Testis (tissue), 5 donors: ENCODE measurements at regions of chr11 and their contacts with region 1.

Region 1: DNA sequence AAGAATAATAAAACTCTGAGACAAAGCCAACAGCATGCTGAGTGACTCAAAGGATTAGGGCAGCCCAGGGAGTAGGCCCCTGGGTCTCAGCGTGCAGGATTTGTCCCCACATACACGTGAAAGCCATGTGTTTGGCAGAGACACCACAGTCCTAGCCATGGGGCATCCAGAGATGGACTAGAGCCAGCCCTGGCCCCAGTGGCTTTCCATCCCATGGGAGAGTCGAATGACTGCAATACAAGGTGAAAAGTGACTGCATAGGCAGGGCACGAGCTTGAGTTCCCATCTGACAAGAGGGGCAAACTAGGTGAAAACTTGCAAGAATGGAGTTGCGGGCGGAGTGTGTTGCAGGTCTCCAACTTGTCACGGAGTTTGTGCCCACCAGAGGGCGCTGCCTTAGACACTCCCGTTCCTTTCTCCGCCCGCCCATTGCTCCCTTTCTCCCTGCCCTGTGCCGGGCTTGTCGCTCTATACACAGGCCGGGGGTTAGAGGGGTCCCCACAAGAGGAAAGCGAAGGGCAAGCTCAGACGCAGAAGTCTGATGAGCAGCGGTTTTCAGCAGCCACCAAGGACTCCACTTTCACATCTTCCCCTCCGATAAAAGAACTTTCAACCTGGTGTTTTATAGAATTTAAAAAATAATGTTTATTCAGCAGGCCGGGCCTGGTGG is 24.2 kb downstream of the TSKU start:
- DNase-seq: peak; percentile 95
- H3K4me3 ChIP-seq: no peak overlapping the region
- H3K27ac ChIP-seq: no peak overlapping the region
- H3K4me1 ChIP-seq: no peaks in the 10 kb centered on the region
- H3K27me3 ChIP-seq: no peaks in the 10 kb centered on the region
- CTCF ChIP-seq: peak; percentile 76 to 77 (median 76)
- POLR2A ChIP-seq: no peak

Region 2: DNA sequence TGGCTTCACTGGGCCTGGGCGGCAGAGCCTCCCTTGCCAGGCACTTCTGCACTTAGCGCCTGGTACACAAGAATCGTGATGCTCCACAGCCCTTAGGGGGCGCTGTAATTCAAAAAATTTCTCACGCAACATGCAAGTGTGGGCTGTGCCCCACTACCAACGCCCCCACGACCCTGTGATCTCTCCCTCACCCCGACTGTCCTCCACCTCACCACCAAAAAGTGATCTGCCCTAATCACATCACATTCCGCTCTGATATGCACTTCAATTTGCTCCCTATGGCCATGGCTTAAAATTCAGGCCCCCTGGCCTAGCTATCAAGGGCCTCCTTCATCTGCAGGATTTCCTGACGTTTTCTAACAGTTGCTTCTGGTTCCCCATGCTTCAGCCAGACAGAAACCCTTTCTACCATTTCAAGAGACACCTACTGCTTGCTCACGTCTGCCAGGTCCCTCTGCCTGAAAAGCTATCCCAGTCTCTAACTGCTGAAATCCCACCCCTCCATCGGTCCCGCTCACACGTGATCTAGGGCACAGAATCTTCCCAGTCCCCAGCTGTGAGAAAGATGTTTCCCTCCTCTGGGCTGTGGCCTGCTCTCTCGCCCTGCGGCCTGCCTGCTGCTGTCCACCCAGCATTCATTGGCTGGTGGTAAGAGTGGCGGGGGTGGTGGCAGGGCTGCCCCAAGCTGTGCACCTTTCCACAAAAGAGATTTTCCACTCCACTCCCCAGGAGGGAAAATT is 108.8 kb before region 1 on chr11:
- intact Hi-C with region 1: no loop called
- DNase-seq: no peak
- H3K4me3 ChIP-seq: no peak overlapping the region
- H3K27ac ChIP-seq: no peak overlapping the region
- H3K4me1 ChIP-seq: no peaks in the 10 kb centered on the region
- H3K27me3 ChIP-seq: no peaks in the 10 kb centered on the region
- CTCF ChIP-seq: peak in 1 of 3 experiments; percentile 30
- POLR2A ChIP-seq: no peak

Region 3: GRCh38 chr11:76734456-76735420 is 72.6 kb before region 1 on chr11:
- intact Hi-C with region 1: no loop called
- DNase-seq: peak; percentile 46
- H3K4me3 ChIP-seq: no peak overlapping the region
- H3K27ac ChIP-seq: peak overlapping the region in 1 of 2 donors; percentile 44
- H3K4me1 ChIP-seq: peaks cover 15% of the 10 kb centered on the region
- H3K27me3 ChIP-seq: no peaks in the 10 kb centered on the region
- CTCF ChIP-seq: no peak
- POLR2A ChIP-seq: no peak

Region 4: GRCh38 chr11:76919887-76920746 is 112.8 kb after region 1 on chr11:
- intact Hi-C with region 1: loop called (anchors 10 kb)
- DNase-seq: peak; percentile 88
- H3K4me3 ChIP-seq: no peak overlapping the region
- H3K27ac ChIP-seq: no peak overlapping the region
- H3K4me1 ChIP-seq: no peaks in the 10 kb centered on the region
- H3K27me3 ChIP-seq: no peaks in the 10 kb centered on the region
- CTCF ChIP-seq: peak; percentile 74 to 94 (median 80)
- POLR2A ChIP-seq: no peak

Region 5: DNA sequence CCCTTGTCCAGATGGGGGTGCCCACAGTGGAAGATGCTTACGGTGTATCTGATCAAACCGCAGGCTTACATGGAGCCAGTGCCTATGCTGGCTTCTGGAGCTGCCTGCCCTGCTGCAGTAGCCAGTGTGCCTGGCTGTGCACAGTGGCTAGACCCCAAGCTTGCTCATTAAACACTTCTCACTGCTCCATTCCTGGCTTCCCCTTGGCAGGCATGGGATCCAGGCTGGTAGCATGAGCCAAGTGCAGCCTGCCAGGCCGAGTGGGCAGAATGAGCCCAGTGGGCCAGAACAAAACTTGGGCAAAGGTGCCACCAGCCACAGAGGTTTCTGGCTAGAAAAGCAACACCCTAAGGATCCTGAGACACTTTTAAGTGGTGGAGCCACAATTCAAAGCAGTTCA is 171.5 kb after region 1 on chr11:
- intact Hi-C with region 1: no loop called
- DNase-seq: no peak
- H3K4me3 ChIP-seq: no peak overlapping the region
- H3K27ac ChIP-seq: no peak overlapping the region
- H3K4me1 ChIP-seq: peaks cover 4% of the 10 kb centered on the region
- H3K27me3 ChIP-seq: no peaks in the 10 kb centered on the region
- CTCF ChIP-seq: no peak
- POLR2A ChIP-seq: no peak